Esophagus squamous epithelium (tissue), 5 donors: ENCODE measurements at regions of chr17 and their contacts with region 1.

Region 1: DNA sequence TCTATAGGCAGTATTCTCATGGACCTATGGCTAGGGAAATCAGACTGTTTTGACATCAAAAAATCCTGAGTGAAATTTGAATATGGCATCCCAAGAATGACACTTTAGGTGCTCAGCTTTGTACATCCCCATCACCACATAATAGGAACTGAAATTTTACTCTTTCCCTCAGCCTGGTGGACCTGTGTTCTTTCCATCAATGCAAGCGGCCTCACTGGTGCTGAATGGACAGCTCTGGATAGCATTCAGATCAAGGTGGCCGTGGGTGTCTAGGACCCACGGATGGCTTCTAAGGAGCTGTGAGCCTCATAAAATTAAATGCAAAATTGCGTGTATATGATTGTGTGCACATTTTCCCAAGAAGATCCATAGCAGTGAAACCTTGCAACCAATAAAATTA is 152.6 kb downstream of the MAP2K6 start:
- DNase-seq: no peak
- H3K4me3 ChIP-seq: no peak overlapping the region
- H3K27ac ChIP-seq: no peak overlapping the region
- H3K4me1 ChIP-seq: peaks cover 0 to 6% (median 5%) of the 10 kb centered on the region in 3 donors
- H3K27me3 ChIP-seq: no peaks in the 10 kb centered on the region
- CTCF ChIP-seq: no peak
- POLR2A ChIP-seq: no peak

Region 2: DNA sequence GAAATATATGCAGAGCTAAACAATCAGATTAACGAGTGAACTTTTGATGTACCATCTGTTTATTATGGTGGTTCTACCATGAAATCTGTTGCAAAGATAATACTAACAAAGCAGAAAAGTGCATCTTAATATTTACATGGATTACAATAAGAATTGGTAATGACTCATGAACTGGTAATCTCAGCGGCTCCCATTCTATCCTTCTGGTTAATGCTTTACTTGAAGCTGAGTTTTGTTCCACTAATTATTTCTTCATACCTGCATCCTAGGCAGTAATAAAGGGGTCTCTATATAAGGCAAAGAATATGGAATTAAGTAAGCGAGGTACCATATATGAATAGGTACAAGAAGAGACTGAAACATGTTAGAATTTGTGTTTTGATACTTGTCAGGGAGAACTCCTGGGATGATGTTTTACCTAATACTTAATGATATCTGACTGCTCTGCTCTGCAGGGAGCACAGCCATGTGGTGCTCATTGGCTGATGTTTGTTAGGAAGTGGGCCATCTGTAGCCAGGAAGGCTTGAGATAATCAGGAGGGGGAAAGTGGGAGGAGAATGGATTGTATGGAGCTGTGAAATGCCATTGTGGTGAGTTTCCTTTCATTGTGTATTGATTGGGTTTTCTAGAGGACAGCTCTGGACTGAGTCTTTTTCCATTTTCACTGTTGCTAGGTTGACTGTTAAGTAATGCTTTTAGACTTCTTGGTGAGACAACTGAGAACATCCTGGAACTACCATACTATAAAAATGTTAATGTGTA is 100.0 kb before region 1 on chr17:
- intact Hi-C with region 1: no loop called
- DNase-seq: no peak
- H3K4me3 ChIP-seq: no peak overlapping the region
- H3K27ac ChIP-seq: no peak overlapping the region
- H3K4me1 ChIP-seq: peaks cover 0 to 14% (median 0%) of the 10 kb centered on the region in 3 donors
- H3K27me3 ChIP-seq: no peaks in the 10 kb centered on the region
- CTCF ChIP-seq: no peak
- POLR2A ChIP-seq: no peak

Region 3: DNA sequence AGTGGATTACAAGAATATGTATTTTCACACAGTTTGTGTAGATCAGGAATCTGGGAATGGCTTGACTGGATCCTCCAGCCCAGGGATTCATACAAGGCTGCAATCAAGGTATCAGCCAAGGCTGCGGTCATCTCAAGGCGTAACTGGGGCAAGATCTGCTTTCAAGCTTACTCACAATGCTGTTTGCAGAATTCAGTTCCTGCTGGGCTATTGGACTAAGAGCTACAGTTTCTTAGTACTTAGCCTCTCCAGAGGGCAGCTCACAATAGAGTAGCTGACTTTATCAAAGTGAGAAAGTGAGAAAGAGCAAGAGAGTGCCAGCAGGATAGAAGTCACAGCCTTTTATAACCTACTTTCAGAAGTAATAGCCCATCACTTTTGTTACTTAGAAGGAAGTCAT is 58.3 kb after region 1 on chr17:
- intact Hi-C with region 1: loop called (anchors 10 kb)
- DNase-seq: no peak
- H3K4me3 ChIP-seq: no peak overlapping the region
- H3K27ac ChIP-seq: no peak overlapping the region
- H3K4me1 ChIP-seq: no peaks in the 10 kb centered on the region
- H3K27me3 ChIP-seq: no peaks in the 10 kb centered on the region
- CTCF ChIP-seq: no peak
- POLR2A ChIP-seq: no peak